ENCODE measurements at regions of chr9 and their contacts with region 1.

Region 1: DNA sequence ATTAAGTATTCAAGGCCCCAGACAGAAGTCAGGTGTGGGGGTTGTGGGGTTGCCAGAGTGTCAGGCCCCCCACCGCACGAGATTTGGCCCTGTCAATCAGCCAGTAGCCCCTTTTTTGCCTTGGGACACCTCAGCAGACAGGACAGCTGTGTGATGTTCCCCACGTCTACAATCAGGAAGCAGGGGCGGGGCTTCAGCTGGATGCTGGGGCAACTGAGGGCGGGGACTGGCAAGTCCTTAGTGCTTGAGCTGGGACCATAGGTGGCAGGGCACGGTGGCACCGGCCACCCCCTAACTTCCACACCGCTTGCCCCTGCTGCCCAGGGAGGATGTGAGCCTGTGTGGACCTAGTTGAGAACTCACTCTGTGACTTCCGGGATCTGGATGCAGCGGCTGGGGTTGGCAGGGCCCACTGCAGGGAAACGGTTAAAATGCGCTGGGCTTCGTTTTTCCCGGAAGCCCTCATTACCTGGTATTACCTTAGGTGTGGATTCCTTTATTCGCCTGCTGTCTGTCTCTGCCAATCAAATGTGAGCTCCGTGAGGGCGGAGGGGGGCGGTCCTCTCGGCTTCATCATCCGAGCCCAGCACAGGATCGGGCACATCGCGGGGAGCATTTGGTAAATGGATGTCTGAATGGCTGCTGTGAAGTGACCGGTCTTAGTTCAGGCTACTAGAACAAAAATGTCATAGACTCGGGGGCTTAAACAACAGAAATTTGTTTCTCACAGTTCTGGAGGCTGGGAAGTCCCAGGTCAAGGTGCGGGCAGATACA is 7.5 kb upstream of the GTF3C5 start:
- DNase-seq: peak in 1 of 2 donors; percentile 43
- ATAC-seq: no peak
- H3K4me3 ChIP-seq: no peak overlapping the region
- H3K4me3 Mint-ChIP-seq: no peak overlapping the region
- H3K27ac ChIP-seq: no peak overlapping the region
- H3K27ac Mint-ChIP-seq: no peak overlapping the region
- H3K4me1 ChIP-seq: peaks cover 10% of the 10 kb centered on the region
- H3K4me1 Mint-ChIP-seq: peaks cover 0 to 16% of the 10 kb centered on the region in 2 donors
- H3K27me3 ChIP-seq: no peaks in the 10 kb centered on the region
- H3K27me3 Mint-ChIP-seq: no peaks in the 10 kb centered on the region
- CTCF ChIP-seq: no peak

Region 2: DNA sequence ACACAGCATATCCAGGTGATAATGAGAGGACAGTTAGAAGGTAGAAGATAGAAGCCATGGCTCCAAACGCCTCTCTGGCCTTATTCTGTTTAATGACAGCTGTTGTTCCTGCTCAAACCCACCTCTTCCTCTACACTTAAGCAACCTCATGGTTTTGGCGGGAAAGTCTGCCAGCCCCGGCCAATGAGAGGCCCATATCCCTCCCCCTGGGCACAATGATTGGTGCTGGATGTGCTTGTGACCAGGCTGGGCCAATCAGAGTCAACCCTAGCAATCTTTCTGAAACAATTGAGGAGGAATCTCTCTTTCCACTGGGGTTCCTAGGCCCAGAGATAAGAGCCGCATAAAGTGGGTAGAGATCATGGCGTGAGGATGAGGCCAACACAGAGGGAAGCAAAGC is 49.6 kb before region 1 on chr9:
- intact Hi-C with region 1: loop called (anchors 2 kb)
- DNase-seq: peak in 1 of 2 donors; percentile 30
- ATAC-seq: no peak
- H3K4me3 ChIP-seq: no peak overlapping the region
- H3K4me3 Mint-ChIP-seq: no peak overlapping the region
- H3K27ac ChIP-seq: no peak overlapping the region
- H3K27ac Mint-ChIP-seq: no peak overlapping the region
- H3K4me1 ChIP-seq: peaks cover 19% of the 10 kb centered on the region
- H3K4me1 Mint-ChIP-seq: peaks cover 5 to 8% of the 10 kb centered on the region in 2 donors
- H3K27me3 ChIP-seq: peaks cover under 1% of the 10 kb centered on the region
- H3K27me3 Mint-ChIP-seq: peaks cover 6 to 12% of the 10 kb centered on the region in 2 donors
- CTCF ChIP-seq: no peak

Measured in natural killer cell (primary cell).